ENCODE measurements at regions of chr17 and their contacts with region 1.

Region 1: GRCh38 chr17:68398691-68399637 is 58.3 kb downstream of the WIPI1 start:
- DNase-seq: peak; percentile 81
- ATAC-seq: peak; percentile 95
- H3K4me3 ChIP-seq: no peak overlapping the region
- H3K27ac ChIP-seq: 0 out of 2 replicates have a peak overlapping the region, but pooled peaks have one; percentile 0
- H3K4me1 ChIP-seq: peaks cover 4% of the 10 kb centered on the region
- H3K27me3 ChIP-seq: no peaks in the 10 kb centered on the region
- CTCF ChIP-seq: peak; percentile 90
- POLR2A ChIP-seq: no peak
- RAD21 ChIP-seq: peak; percentile 89

Region 2: GRCh38 chr17:68221760-68222159 is 177.2 kb before region 1 on chr17:
- CTCF ChIA-PET with region 1: no interaction called
- POLR2A ChIA-PET with region 1: no interaction called
- dilution Hi-C with region 1: no loop called
- in situ Hi-C with region 1: no loop called
- intact Hi-C with region 1: no loop called
- DNase-seq: no peak
- ATAC-seq: no peak
- H3K4me3 ChIP-seq: no peak overlapping the region
- H3K27ac ChIP-seq: no peak overlapping the region
- H3K4me1 ChIP-seq: no peaks in the 10 kb centered on the region
- H3K27me3 ChIP-seq: no peaks in the 10 kb centered on the region
- CTCF ChIP-seq: no peak
- POLR2A ChIP-seq: no peak
- RAD21 ChIP-seq: no peak

Region 3: DNA sequence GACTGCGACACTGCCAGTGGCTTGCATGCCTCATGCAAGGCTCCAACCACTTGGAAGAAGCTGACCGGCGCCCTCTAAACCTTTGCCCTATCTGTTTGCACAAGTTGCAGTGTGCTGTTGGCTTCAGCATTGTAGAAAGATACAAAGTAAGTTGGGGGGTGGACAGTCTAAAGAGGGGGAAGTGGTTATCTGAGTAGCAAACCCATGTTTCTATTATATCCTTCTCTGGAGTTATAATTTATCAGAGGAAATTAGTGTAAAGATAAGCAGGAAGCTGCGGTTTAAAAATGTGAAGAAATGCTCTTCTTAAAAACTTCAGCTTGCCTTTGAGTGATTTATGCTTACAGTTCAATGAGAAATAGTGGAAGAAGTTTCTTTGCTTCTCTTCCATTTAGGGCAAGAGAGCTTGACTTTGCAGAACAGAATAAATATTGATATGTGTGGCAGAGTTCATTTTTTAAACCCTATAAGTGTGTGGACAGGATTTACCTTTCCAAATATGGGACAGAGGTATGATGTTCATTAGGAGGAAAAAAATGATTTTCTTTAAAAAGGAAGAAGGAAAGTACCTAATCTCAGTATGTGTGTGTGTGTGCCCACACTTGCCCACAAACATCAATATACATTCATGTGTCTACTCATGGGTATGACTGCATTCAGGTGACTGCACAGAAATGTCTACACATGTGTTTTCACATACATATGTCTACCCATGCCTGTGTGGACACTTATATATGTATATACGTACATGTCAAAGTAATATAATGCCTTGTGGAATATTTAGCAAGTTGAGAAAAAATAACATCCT is 143.0 kb before region 1 on chr17:
- CTCF ChIA-PET with region 1: interaction called, 4 read pairs
- POLR2A ChIA-PET with region 1: no interaction called
- dilution Hi-C with region 1: no loop called
- in situ Hi-C with region 1: loop called (anchors 5 kb)
- intact Hi-C with region 1: no loop called
- DNase-seq: no peak
- ATAC-seq: no peak
- H3K4me3 ChIP-seq: no peak overlapping the region
- H3K27ac ChIP-seq: no peak overlapping the region
- H3K4me1 ChIP-seq: no peaks in the 10 kb centered on the region
- H3K27me3 ChIP-seq: no peaks in the 10 kb centered on the region
- CTCF ChIP-seq: no peak
- POLR2A ChIP-seq: no peak
- RAD21 ChIP-seq: no peak

Region 4: GRCh38 chr17:68383443-68384321 is 15.3 kb before region 1 on chr17:
- CTCF ChIA-PET with region 1: interaction called, 27 read pairs
- POLR2A ChIA-PET with region 1: no interaction called
- dilution Hi-C with region 1: no loop called
- in situ Hi-C with region 1: no loop called
- intact Hi-C with region 1: no loop called
- DNase-seq: peak; percentile 94
- ATAC-seq: peak; percentile 55
- H3K4me3 ChIP-seq: no peak overlapping the region
- H3K27ac ChIP-seq: peak overlapping the region; percentile 94
- H3K4me1 ChIP-seq: peaks cover 25% of the 10 kb centered on the region
- H3K27me3 ChIP-seq: no peaks in the 10 kb centered on the region
- CTCF ChIP-seq: no peak
- POLR2A ChIP-seq: peak; percentile 55; the same call in 1 of the 2 replicates
- RAD21 ChIP-seq: no peak; the same call in 1 of the 2 replicates

Region 5: DNA sequence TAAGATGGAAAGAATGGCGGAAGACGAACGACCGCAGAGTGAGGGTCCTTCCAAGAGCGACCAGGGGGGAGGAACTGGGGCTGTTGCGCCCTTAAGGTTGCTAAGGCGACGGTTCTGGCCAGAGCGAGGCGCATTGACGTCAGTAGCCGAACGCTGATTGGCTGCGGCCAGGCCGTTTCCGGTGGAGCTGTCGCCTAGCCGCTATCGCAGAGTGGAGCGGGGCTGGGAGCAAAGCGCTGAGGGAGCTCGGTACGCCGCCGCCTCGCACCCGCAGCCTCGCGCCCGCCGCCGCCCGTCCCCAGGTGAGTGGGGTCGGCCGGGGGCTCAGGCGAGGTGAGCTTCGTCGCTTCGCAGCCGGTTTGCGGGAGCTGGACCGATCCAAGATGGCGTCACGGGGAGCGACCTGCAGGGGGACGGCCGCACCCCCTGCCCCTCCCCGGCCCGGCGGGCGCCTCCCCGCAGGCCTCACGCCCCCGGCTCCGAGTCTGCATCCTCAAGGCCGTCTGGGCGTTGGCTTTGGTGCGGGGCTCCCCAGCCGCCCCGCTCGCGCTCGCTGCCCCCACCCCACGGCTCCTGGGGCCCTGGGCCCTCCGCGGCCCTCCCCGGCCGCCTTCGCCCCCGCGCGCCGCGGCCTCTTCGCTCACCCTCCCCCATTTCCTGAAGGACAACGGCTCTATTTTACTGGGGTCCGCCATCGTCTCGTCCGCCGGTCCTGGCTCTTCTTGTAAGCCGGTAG is 113.5 kb after region 1 on chr17 and contains the start of gene PRKAR1A:
- CTCF ChIA-PET with region 1: no interaction called
- POLR2A ChIA-PET with region 1: no interaction called
- dilution Hi-C with region 1: no loop called
- in situ Hi-C with region 1: no loop called
- intact Hi-C with region 1: no loop called
- DNase-seq: peak; percentile 95
- ATAC-seq: peak; percentile 82
- H3K4me3 ChIP-seq: peak within 1 kb of the TSS; percentile 77
- H3K27ac ChIP-seq: peak within 1 kb of the TSS; percentile 96
- H3K4me1 ChIP-seq: peaks cover 1% of the 10 kb centered on the region; the same call in 1 of the 2 replicates
- H3K27me3 ChIP-seq: no peaks in the 10 kb centered on the region
- CTCF ChIP-seq: 0 out of 2 replicates have a peak, but pooled peaks have one; percentile 2
- POLR2A ChIP-seq: peak; percentile 94
- RAD21 ChIP-seq: no peak
- total RNA-seq, gene PRKAR1A: 256 and 278 TPM in 2 replicates